Right ventricle myocardium inferior (tissue), 1 donor: ENCODE measurements at regions of chr7 and their contacts with region 1.

Region 1: DNA sequence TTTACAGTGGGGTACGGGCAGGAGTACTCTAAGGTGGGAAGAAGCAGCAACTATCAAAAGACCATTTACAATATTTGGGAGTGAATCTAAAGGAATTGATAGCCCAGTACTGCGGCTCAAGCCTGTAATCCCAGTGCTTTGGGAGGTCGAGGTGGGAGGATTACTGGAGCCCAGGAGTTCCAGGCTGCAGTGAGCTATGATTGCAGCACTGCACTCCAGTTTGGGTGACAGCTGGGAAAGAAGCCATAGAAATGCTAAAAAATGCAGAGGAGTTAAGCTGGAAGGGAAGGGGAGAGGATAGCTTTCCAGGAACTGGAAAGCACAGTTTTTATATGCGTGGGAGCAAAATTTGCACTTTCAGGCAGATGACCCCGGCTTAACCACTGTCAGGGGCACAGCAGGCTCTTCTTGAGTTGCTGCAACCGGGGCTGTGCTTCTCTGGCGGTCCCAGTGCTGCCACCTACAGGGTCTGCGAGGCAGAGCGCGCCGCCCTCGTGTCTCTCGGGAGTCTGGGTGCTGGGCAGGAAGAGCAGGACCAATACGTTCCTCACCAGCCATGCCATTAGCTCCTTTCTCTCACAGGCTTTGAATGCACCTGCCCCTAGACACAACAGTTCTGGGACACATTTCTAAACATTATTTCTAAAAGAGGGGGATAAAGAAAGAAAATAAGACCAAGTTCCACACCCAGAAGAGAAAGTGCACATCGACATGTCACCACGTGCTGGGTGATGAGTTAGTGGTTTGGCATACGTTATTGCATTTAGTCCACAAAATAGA is 10.1 kb upstream of the BMPER start:
- DNase-seq: peak; percentile 90
- ATAC-seq: peak; percentile 90

Region 2: DNA sequence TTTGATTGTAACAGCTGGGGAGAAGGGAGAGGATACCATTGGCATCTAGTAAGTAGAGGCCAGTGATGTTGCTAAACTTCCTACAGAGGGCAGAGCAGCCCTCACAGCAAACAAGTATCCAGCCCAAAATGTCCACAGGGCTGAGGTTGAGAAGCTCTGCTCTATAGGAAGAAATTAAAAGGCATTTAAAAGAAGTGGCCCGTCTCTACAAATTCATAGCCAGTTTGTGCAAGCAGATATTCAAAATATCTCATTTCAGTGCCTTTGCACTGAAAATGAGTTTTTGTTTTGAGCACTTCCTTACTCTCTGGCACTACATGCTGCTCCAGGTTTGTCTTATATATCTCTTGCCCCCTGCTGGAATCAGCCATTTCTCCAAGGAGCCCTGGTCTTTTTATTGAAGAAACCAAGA is 435.9 kb before region 1 on chr7:
- intact Hi-C with region 1: loop called (anchors 2 kb)
- DNase-seq: no peak
- ATAC-seq: peak; percentile 72

Region 3: GRCh38 chr7:33719059-33719581 is 176.1 kb before region 1 on chr7:
- intact Hi-C with region 1: loop called (anchors 2 kb)
- DNase-seq: peak; percentile 81
- ATAC-seq: peak; percentile 98

Region 4: DNA sequence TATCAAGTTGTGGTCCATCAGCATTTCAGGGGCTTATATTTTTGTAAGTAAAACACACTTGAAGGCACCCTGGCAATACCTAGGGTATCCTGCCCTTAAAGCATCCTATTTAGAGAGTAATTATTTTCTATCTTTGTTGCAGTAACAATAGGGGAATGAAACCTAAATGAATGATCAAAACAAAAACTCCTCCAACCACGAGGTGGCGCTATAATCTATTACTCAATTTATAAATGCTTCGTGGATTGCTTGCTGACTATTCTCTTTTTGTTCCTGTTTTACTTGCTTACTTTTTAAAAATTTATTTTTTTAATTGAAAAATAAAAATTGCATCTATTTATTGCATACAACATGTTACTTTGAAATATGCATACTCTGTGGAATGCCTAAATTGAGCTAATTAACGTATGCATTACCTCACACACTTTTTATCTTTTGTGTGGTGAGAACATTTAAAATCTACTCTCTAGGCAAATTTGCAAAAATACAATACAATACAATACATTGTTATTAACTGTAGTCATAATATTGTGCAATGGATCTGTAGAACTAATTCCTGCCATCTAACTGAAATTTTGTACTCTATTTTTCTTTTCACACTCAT is 137.6 kb before region 1 on chr7:
- intact Hi-C with region 1: loop called (anchors 2 kb)
- DNase-seq: no peak
- ATAC-seq: no peak